CD8-positive, alpha-beta memory T cell (primary cell): ENCODE measurements at regions of chr4 and their contacts with region 1.

Region 1: GRCh38 chr4:76993787-76994641 is 44.5 kb downstream of the SEPTIN11 start:
- DNase-seq: peak in 4 of 5 donors; percentile 37 to 84 (median 72)
- H3K4me3 ChIP-seq: peak overlapping the region; percentile 50
- H3K4me3 Mint-ChIP-seq: peak overlapping the region; percentile 5 to 81 (median 67)
- H3K27ac ChIP-seq: no peak overlapping the region
- H3K27ac Mint-ChIP-seq: peak overlapping the region; percentile 32 to 90 (median 85)
- H3K4me1 ChIP-seq: peaks cover 60% of the 10 kb centered on the region
- H3K4me1 Mint-ChIP-seq: peaks cover 44 to 65% (median 63%) of the 10 kb centered on the region in 3 donors
- H3K27me3 ChIP-seq: no peaks in the 10 kb centered on the region
- H3K27me3 Mint-ChIP-seq: no peaks in the 10 kb centered on the region

Region 2: DNA sequence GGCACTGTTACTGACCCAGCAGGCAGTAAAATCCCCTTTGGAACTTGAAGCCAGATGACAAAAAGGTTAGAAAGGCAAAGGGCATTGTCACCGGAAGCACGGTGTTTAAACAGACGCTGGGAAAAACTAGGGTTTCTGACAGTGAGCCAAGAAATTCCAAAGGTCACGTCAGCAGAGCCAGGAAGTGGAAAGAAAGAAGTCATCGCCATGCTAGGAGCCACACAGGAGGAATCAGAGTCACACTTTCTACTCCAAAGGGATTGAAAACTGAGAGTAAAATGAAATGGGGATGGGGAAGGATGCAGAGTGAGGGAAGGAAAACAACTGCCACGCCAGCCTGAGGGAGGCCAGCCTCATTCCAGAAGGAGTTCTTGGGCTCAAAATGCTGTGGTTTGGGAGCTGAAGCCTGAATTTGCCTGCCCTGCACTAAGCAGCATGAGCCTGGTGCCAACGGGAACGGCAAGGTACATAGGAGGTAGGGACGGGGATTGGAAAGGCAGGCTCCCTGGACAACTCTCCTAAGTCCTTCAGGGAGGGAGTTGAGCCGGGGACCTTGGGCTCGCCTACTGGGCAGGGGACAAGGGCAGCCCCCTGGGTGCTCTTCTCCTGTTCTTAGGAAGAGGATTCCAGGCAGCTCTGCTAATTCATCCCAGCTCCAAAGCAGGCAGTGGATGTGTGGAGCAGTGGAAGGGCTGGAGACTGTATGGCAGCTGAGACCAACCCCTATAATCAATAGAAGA is 162.9 kb before region 1 on chr4:
- CTCF ChIA-PET with region 1: no interaction called
- POLR2A ChIA-PET with region 1: no interaction called
- DNase-seq: no peak
- H3K4me3 ChIP-seq: no peak overlapping the region
- H3K4me3 Mint-ChIP-seq: no peak overlapping the region
- H3K27ac ChIP-seq: no peak overlapping the region
- H3K27ac Mint-ChIP-seq: no peak overlapping the region
- H3K4me1 ChIP-seq: no peaks in the 10 kb centered on the region
- H3K4me1 Mint-ChIP-seq: no peaks in the 10 kb centered on the region
- H3K27me3 ChIP-seq: no peaks in the 10 kb centered on the region
- H3K27me3 Mint-ChIP-seq: peaks cover 3 to 10% of the 10 kb centered on the region in 2 donors

Region 3: DNA sequence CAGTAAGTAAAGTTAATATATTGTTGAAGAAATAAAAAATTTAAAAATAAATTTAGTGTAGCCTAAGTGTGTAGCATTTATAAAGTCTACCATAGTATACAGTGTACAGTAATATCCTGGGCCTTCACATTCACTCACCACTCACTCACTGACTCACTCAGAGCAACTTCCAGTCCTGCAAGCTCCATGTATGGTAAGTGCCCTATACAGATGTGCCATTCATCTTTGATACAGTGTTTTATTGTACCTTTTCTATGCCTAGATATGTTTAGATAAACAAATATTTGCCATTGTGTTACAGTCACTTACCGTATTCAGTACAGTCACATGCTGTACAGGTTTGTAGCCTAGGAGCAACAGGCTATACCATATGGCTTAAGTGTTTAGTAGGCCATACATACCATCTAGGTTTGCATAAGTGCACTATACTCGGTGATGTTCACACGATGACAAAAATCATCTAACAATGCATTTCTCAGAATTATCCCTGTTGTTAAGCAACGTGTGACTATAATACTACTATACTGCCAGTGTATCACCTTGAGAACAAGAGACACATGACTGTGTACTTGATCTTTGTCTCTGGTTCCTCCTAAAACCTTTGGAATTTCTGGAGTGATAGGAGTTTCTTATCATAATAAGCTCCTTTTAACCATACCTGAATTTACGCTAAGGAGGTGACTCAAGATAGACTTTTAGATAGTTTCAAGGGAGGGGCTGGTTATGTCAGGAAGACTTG is 70.2 kb before region 1 on chr4:
- CTCF ChIA-PET with region 1: no interaction called
- POLR2A ChIA-PET with region 1: no interaction called
- DNase-seq: no peak
- H3K4me3 ChIP-seq: no peak overlapping the region
- H3K4me3 Mint-ChIP-seq: no peak overlapping the region
- H3K27ac ChIP-seq: no peak overlapping the region
- H3K27ac Mint-ChIP-seq: no peak overlapping the region
- H3K4me1 ChIP-seq: no peaks in the 10 kb centered on the region
- H3K4me1 Mint-ChIP-seq: no peaks in the 10 kb centered on the region
- H3K27me3 ChIP-seq: no peaks in the 10 kb centered on the region
- H3K27me3 Mint-ChIP-seq: peaks cover 2 to 3% of the 10 kb centered on the region in 2 donors

Region 4: GRCh38 chr4:76983191-76983584 is 10.8 kb before region 1 on chr4:
- CTCF ChIA-PET with region 1: no interaction called
- POLR2A ChIA-PET with region 1: interaction called, 12 read pairs
- DNase-seq: no peak
- H3K4me3 ChIP-seq: no peak overlapping the region
- H3K4me3 Mint-ChIP-seq: peak overlapping the region in 3 of 7 donors; percentile 45 to 68 (median 51)
- H3K27ac ChIP-seq: peak overlapping the region; percentile 11
- H3K27ac Mint-ChIP-seq: peak overlapping the region in 7 of 8 donors; percentile 13 to 78 (median 48)
- H3K4me1 ChIP-seq: peaks cover 53% of the 10 kb centered on the region
- H3K4me1 Mint-ChIP-seq: peaks cover 73 to 94% (median 92%) of the 10 kb centered on the region in 3 donors
- H3K27me3 ChIP-seq: no peaks in the 10 kb centered on the region
- H3K27me3 Mint-ChIP-seq: no peaks in the 10 kb centered on the region